ENCODE measurements at regions of chr14 and their contacts with region 1.

Region 1: DNA sequence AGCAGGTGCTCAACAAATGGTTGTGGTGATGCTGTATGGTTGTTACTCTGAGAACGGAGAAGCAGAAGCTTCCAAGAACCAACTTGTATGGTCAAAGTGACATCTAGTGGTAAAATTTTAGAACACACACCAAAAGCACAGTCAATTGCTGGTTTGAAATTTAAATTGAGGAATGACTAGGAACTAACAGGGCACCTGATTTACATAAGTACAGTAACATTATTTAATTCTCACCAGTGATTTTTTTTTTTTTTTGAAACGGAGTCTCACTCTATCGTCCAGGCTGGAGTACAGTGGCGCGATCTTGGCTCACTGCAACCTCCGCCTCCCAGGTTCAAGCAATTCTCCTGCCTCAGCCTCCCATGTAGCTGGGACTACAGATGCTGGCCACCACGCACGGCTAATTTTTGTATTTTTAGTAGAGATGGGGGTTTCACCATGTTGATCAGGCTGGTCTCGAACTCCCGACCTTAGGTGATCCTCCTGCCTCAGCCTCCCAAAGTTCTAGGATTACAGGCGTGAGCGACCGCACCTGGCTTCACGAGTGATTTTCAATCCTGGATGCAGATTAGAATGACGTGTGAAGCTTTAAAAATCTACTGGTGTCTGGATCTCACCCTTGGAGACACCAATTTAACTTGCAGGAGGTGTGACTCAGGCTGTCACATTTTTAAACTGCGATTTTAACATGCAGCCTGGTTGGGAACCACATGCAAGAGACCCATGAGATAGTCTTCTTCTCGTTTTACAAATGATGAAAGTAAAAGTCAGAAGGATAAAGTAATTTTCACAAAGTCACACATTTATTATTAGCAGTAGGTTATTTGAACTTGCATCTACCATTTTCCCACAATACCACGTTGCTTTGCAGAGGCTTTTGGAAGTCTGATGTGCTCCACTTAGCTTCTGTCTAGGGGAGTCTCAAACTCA is 14.1 kb upstream of the NUMB start:
- DNase-seq: peak in 1 of 2 donors; percentile 86
- H3K4me3 ChIP-seq: no peak overlapping the region
- H3K27ac ChIP-seq: no peak overlapping the region
- H3K4me1 ChIP-seq: peaks cover 0 to 10% (median 4%) of the 10 kb centered on the region in 4 donors
- H3K27me3 ChIP-seq: no peaks in the 10 kb centered on the region
- CTCF ChIP-seq: peak in 5 of 7 experiments; percentile 53 to 80 (median 69)
- EP300 ChIP-seq: no peak
- POLR2A ChIP-seq: no peak

Region 2: GRCh38 chr14:73173092-73173735 is 299.2 kb before region 1 on chr14:
- intact Hi-C with region 1: loop called (anchors 10 kb)
- DNase-seq: peak in 1 of 2 donors; percentile 73
- H3K4me3 ChIP-seq: no peak overlapping the region
- H3K27ac ChIP-seq: no peak overlapping the region
- H3K4me1 ChIP-seq: peaks cover 0 to 8% (median 4%) of the 10 kb centered on the region in 4 donors
- H3K27me3 ChIP-seq: no peaks in the 10 kb centered on the region
- CTCF ChIP-seq: peak in 3 of 7 experiments; percentile 18 to 42 (median 28)
- EP300 ChIP-seq: no peak
- POLR2A ChIP-seq: no peak

Region 3: GRCh38 chr14:73283608-73284379 is 188.7 kb before region 1 on chr14:
- intact Hi-C with region 1: no loop called
- DNase-seq: peak in 1 of 2 donors; percentile 41
- H3K4me3 ChIP-seq: no peak overlapping the region
- H3K27ac ChIP-seq: no peak overlapping the region
- H3K4me1 ChIP-seq: peaks cover 0 to 8% (median 0%) of the 10 kb centered on the region in 4 donors
- H3K27me3 ChIP-seq: no peaks in the 10 kb centered on the region
- CTCF ChIP-seq: no peak
- EP300 ChIP-seq: no peak
- POLR2A ChIP-seq: no peak

Region 4: GRCh38 chr14:73307261-73307660 is 165.2 kb before region 1 on chr14:
- intact Hi-C with region 1: loop called (anchors 10 kb)
- DNase-seq: no peak
- H3K4me3 ChIP-seq: no peak overlapping the region
- H3K27ac ChIP-seq: no peak overlapping the region
- H3K4me1 ChIP-seq: peaks cover 0 to 14% (median 7%) of the 10 kb centered on the region in 4 donors
- H3K27me3 ChIP-seq: no peaks in the 10 kb centered on the region
- CTCF ChIP-seq: no peak
- EP300 ChIP-seq: no peak
- POLR2A ChIP-seq: no peak

Region 5: DNA sequence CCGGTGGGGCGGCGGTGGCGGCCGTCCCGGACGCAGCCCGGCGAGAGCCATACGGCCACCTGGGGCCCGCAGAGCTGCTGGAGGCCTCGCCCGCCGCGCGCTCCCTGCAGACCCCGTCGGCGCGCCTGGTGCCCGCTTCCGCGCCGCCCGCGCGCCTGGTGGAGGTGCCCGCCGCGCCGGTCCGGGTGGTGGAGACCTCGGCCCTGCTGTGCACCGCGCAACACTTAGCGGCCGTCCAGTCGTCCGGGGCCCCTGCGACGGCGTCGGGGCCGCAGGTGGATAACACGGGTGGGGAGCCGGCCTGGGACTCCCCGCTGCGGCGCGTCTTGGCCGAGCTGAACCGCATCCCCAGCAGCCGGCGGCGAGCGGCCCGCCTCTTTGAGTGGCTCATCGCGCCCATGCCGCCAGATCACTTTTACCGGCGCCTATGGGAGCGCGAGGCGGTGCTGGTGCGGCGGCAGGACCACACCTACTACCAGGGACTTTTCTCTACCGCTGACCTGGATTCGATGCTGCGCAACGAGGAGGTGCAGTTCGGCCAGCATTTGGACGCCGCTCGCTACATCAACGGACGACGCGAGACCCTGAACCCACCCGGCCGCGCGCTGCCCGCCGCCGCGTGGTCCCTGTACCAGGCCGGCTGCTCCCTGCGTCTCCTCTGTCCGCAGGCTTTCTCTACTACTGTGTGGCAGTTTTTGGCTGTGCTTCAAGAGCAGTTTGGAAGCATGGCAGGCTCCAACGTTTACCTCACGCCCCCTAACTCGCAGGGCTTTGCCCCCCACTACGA is 19.0 kb after region 1 on chr14:
- intact Hi-C with region 1: no loop called
- DNase-seq: peak; percentile 71 to 83
- H3K4me3 ChIP-seq: peak overlapping the region; percentile 60 to 93 (median 79)
- H3K27ac ChIP-seq: peak overlapping the region; percentile 54 to 91 (median 89)
- H3K4me1 ChIP-seq: peaks cover 20 to 43% (median 40%) of the 10 kb centered on the region in 4 donors
- H3K27me3 ChIP-seq: no peaks in the 10 kb centered on the region
- CTCF ChIP-seq: no peak
- EP300 ChIP-seq: no peak
- POLR2A ChIP-seq: peak in 1 of 4 donors; percentile 27

Measured in stomach (tissue), 19 donors.